Calu3 (cell line): ENCODE measurements at regions of chr2 and their contacts with region 1.

Region 1: GRCh38 chr2:165182029-165182428 is 21.8 kb downstream of the SCN3A start:
- DNase-seq: no peak
- H3K4me3 Mint-ChIP-seq: no peak overlapping the region
- H3K27ac Mint-ChIP-seq: no peak overlapping the region
- H3K4me1 Mint-ChIP-seq: no peaks in the 10 kb centered on the region
- H3K27me3 Mint-ChIP-seq: no peaks in the 10 kb centered on the region
- CTCF ChIP-seq: no peak

Region 2: DNA sequence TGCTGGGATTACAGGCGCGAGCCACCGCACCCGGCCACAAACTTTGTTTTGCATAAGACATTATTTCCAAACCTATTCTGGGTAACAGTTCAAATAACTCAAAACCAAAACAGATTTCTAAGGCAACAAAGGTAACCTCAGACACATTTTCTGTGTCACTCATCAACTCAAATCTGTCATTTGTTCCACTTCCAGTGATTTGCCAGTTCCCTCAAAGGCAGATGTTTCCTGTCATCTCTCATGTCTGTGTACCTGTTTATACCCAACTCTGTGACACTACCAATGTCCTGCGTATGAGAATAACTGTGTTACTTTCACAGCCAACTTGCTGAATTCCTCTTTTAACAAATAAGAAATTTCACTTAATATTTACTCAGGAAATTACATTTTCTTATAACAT is 32.6 kb before region 1 on chr2:
- CTCF ChIA-PET with region 1: interaction called, 10 read pairs
- intact Hi-C with region 1: loop called (anchors 5 kb)
- DNase-seq: no peak
- H3K4me3 Mint-ChIP-seq: no peak overlapping the region
- H3K27ac Mint-ChIP-seq: no peak overlapping the region
- H3K4me1 Mint-ChIP-seq: peaks cover 6% of the 10 kb centered on the region
- H3K27me3 Mint-ChIP-seq: no peaks in the 10 kb centered on the region
- CTCF ChIP-seq: no peak

Region 3: DNA sequence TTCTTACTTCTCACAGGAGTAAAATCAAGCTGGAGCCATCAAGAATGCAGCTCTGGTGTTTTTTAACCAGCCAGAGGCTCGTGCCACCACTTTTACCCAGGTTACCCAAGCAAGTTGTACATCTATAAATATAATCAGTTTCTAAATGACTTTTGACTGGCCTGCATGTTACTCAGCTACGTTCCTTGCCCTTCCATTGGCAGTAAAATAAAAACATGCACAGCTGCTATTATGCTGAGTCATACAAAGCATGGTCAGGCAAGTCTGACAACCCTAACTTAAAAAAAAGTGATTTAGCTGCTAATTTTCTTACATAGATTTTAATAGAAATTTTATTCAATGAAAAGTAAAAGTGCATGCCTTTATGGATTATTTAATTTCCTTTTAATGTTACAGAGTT is 175.7 kb after region 1 on chr2:
- CTCF ChIA-PET with region 1: no interaction called
- intact Hi-C with region 1: no loop called
- DNase-seq: no peak
- H3K4me3 Mint-ChIP-seq: no peak overlapping the region
- H3K27ac Mint-ChIP-seq: no peak overlapping the region
- H3K4me1 Mint-ChIP-seq: no peaks in the 10 kb centered on the region
- H3K27me3 Mint-ChIP-seq: no peaks in the 10 kb centered on the region
- CTCF ChIP-seq: no peak